GM18951 (cell line): ENCODE measurements at regions of chr2 and their contacts with region 1.

Region 1: DNA sequence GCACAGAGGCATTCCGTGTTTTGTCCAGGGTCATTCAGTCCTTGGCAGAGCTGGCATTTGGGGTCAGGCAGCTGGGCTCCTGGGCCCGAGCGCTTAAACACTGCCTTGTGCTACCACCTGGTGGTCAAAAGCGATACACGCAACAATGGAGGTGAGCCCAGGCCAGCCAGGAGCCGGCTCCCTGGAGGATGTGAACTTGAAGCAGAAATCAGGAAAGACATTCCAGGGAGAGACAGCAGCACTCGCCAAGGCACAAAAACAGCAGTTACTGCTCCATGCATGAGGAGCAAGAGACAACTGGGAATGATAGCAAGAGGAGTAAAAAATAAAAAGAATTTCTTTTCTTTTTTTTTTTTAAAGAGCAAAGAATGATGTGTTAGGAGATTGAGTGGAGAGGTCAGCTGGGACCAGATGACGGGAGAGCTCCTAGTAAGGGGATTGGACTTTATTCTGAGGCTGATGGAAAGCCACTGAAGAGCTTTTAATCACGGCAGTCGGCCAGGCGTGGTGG is 20.7 kb downstream of the SCYGR8 start:
- POLR2A ChIP-seq: no peak

Region 2: GRCh38 chr2:227125506-227125905 is 640.9 kb before region 1 on chr2:
- in situ Hi-C with region 1: loop called (anchors 25 kb)
- POLR2A ChIP-seq: no peak

Region 3: DNA sequence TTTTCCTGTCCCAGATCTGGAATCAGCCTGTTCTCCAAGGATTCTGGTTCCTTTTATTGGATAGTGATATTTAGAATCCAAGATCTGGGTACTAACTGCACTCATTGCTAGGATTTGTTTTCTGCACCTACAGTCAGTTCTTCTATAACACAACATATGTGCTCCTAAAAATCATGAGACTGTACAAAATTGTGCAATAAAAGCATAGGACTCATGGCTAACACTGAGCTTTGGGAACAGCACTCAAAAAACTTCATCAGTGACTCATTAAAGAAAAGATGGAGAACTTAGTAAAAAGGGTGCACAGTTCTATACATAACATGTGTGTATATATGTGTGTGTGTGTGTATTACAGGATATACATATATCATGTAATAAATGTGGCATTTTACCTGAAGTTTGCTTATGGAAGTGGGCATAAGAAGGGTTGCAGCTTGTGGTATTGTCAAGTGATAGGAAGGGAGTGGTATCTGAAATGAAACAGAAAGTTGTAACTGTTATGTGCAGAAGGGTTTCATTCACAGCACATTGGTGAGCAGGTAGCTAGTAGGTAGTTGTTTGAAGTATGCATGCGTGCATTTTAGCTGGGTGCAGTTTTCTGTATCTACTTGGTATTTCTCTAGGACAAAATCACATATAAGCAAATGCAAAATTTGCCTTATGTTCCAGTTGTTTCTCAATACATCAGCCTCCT is 173.6 kb before region 1 on chr2:
- in situ Hi-C with region 1: no loop called
- POLR2A ChIP-seq: no peak